ENCODE measurements at regions of chr1 and their contacts with region 1.

Region 1: DNA sequence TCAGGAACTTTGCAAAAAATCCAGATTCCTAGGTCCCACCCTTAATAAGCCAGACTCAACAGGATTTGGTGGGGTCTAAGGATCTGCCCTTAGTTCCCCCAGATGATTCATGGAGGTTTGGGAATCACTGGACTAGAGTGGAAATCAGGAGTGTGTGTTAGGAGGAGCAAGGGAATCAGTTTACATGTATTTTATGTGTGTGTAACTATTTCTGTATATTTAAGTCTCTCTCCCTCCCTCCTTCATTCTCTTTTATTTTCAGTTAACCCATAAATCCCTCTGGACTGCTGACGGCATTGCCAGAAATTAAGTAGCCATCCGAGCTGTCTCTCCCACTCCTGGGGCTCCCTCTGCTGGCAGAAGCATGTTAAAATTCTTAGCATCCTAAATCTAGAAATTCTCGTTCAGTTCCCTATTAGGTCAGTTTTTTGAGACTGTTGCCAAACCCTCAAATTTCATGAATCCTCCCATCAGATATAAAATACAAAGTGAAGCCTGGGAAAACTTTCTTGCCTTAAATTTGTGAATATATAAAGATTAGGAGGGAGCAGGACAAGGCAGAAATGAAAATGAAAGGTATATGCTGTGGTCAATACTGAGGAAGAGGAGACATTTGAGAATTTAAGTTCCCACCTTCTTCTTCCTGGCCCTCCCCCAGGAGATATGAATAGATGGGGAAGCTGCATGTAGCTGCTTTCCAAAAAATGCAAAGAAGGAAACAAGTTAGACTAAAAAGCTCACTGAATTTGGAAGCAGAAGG is 11.7 kb upstream of the HSD11B1 start:
- DNase-seq: peak in 5 of 6 donors; percentile 43 to 79 (median 72)
- ATAC-seq: peak; percentile 69 to 84 (median 83)
- H3K4me3 ChIP-seq: no peak overlapping the region
- H3K27ac ChIP-seq: no peak overlapping the region
- H3K4me1 ChIP-seq: no peaks in the 10 kb centered on the region
- H3K27me3 ChIP-seq: no peaks in the 10 kb centered on the region
- CTCF ChIP-seq: peak; percentile 70 to 80 (median 73)

Region 2: GRCh38 chr1:209576798-209577197 is 116.1 kb before region 1 on chr1:
- intact Hi-C with region 1: loop called in 1 of 3 experiments (anchors 5 kb)
- DNase-seq: peak; percentile 64 to 93 (median 84)
- ATAC-seq: peak; percentile 91 to 100 (median 100)
- H3K4me3 ChIP-seq: no peak overlapping the region
- H3K27ac ChIP-seq: no peak overlapping the region
- H3K4me1 ChIP-seq: no peaks in the 10 kb centered on the region
- H3K27me3 ChIP-seq: peaks cover 0 to 3% (median 0%) of the 10 kb centered on the region in 4 donors
- CTCF ChIP-seq: peak; percentile 81 to 92 (median 90)

Region 3: GRCh38 chr1:209585672-209586071 is 107.3 kb before region 1 on chr1:
- intact Hi-C with region 1: loop called in 1 of 3 experiments (anchors 5 kb)
- DNase-seq: peak; percentile 23 to 74 (median 39)
- ATAC-seq: peak; percentile 76 to 86 (median 84)
- H3K4me3 ChIP-seq: no peak overlapping the region
- H3K27ac ChIP-seq: no peak overlapping the region
- H3K4me1 ChIP-seq: no peaks in the 10 kb centered on the region
- H3K27me3 ChIP-seq: peaks cover 0 to 18% (median 5%) of the 10 kb centered on the region in 4 donors
- CTCF ChIP-seq: no peak

Region 4: GRCh38 chr1:209601809-209602657 is 90.9 kb before region 1 on chr1:
- intact Hi-C with region 1: loop called in 1 of 3 experiments (anchors 10 kb)
- DNase-seq: peak in 2 of 6 donors; percentile 20 to 55
- ATAC-seq: peak; percentile 88 to 97 (median 95)
- H3K4me3 ChIP-seq: no peak overlapping the region
- H3K27ac ChIP-seq: no peak overlapping the region
- H3K4me1 ChIP-seq: no peaks in the 10 kb centered on the region
- H3K27me3 ChIP-seq: no peaks in the 10 kb centered on the region
- CTCF ChIP-seq: peak; percentile 21 to 69 (median 56)

Region 5: DNA sequence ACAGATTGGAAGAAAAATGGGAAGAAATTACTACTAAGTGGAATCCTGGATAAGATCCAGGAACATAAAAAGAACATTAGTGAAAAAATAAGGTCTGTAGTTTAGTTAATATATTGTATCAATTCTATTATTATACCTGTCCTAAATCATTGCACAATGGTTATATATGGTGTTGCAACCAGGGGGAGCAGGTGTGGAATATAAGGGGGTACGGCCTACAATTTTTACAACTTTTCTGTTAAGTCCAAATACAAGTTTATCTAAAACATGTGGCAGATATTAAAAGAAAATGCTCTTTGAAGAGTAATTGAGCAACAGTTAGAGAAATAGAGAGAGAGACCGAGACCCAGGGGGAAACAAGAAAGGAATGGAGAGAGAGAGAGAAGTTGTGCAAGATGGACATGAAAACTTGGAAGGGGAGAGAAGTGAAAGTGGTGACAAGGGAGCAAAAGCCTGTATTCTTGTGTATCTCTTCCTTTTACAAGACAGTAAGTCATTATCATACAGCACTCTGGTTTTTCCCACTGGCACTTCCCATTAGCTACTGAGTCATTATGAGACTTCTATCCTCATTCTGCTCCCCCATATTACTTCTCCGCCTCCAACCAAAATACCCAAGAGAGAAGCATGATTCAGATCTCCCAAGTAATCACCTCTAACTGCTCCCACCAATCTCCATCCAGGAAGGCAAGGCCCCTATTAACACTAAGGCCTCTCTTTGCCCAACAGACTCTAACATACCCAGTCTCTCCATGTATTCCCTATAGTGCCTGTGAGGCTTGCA is 40.7 kb after region 1 on chr1:
- intact Hi-C with region 1: no loop called
- DNase-seq: no peak
- ATAC-seq: peak in 3 of 4 donors; percentile 25 to 75 (median 65)
- H3K4me3 ChIP-seq: no peak overlapping the region
- H3K27ac ChIP-seq: no peak overlapping the region
- H3K4me1 ChIP-seq: no peaks in the 10 kb centered on the region
- H3K27me3 ChIP-seq: no peaks in the 10 kb centered on the region
- CTCF ChIP-seq: no peak

Measured in pancreas (tissue), 10 donors.